Heart left ventricle (tissue), 16 donors: ENCODE measurements at regions of chrX and their contacts with region 1.

Region 1: GRCh38 chrX:44314259-44314734 is 29.2 kb downstream of the EFHC2 start:
- DNase-seq: peak; percentile 41 to 68 (median 56)
- ATAC-seq: peak; percentile 96 to 98 (median 98)
- H3K4me3 ChIP-seq: no peak overlapping the region
- H3K27ac ChIP-seq: peak overlapping the region in 8 of 12 donors; percentile 55 to 84 (median 68)
- H3K4me1 ChIP-seq: peaks cover 0 to 12% (median 0%) of the 10 kb centered on the region in 12 donors
- H3K27me3 ChIP-seq: peaks cover 0 to 15% (median 0%) of the 10 kb centered on the region in 9 donors
- CTCF ChIP-seq: no peak
- POLR2A ChIP-seq: no peak

Region 2: DNA sequence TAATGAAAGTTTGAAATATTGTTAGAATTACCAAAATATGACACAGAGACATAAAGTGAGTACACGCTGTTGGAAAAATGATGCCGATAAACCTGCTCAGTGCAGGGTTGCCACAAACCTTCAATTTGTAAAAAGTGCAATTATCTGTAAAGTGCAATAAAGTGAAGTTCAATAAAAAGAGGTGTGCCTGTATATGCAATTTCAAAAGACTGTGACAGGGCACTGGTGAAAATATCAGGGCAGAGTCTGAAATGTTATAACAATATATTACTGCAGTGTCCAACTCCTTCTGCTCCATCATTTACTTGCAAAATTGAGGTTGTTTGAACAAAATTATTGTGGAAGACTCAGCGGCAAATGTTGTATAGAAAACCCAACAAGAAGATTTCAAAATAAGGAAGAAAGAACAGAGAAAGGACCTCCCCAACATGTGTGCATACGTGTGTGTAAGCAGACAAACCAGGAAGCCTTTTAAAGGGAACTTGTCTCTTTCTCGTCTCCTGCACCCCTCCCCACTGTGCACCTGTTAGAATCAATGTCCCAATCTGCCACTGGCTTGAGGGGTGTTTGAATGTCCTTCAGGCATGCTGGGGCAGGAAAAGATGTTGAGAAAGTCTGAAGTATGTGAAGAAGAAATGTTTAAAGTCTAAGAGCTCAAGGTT is 528.2 kb before region 1 on chrX:
- intact Hi-C with region 1: no loop called
- DNase-seq: no peak
- ATAC-seq: no peak
- H3K4me3 ChIP-seq: no peak overlapping the region
- H3K27ac ChIP-seq: no peak overlapping the region
- H3K4me1 ChIP-seq: no peaks in the 10 kb centered on the region
- H3K27me3 ChIP-seq: peaks cover 0 to 9% (median 0%) of the 10 kb centered on the region in 9 donors
- CTCF ChIP-seq: no peak
- POLR2A ChIP-seq: no peak

Region 3: GRCh38 chrX:44253575-44253942 is 60.7 kb before region 1 on chrX:
- intact Hi-C with region 1: loop called in 1 of 10 experiments (anchors 10 kb)
- DNase-seq: no peak
- ATAC-seq: no peak
- H3K4me3 ChIP-seq: peak overlapping the region in 9 of 12 donors; percentile 18 to 40 (median 27)
- H3K27ac ChIP-seq: peak overlapping the region in 4 of 12 donors; percentile 13 to 74 (median 40)
- H3K4me1 ChIP-seq: peaks cover 0 to 15% (median 0%) of the 10 kb centered on the region in 12 donors
- H3K27me3 ChIP-seq: peaks cover 0 to 22% (median 0%) of the 10 kb centered on the region in 9 donors
- CTCF ChIP-seq: no peak
- POLR2A ChIP-seq: no peak